CD4-positive, alpha-beta T cell (primary cell): ENCODE measurements at regions of chr1 and their contacts with region 1.

Region 1: GRCh38 chr1:101013776-101014175 is 11.8 kb downstream of the DPH5 start:
- DNase-seq: no peak
- ATAC-seq: no peak
- H3K4me3 ChIP-seq: no peak overlapping the region
- H3K4me3 Mint-ChIP-seq: no peak overlapping the region
- H3K27ac ChIP-seq: no peak overlapping the region
- H3K27ac Mint-ChIP-seq: no peak overlapping the region
- H3K4me1 ChIP-seq: no peaks in the 10 kb centered on the region
- H3K4me1 Mint-ChIP-seq: peaks cover 49% of the 10 kb centered on the region
- H3K27me3 ChIP-seq: no peaks in the 10 kb centered on the region
- H3K27me3 Mint-ChIP-seq: no peaks in the 10 kb centered on the region
- CTCF ChIP-seq: no peak

Region 2: DNA sequence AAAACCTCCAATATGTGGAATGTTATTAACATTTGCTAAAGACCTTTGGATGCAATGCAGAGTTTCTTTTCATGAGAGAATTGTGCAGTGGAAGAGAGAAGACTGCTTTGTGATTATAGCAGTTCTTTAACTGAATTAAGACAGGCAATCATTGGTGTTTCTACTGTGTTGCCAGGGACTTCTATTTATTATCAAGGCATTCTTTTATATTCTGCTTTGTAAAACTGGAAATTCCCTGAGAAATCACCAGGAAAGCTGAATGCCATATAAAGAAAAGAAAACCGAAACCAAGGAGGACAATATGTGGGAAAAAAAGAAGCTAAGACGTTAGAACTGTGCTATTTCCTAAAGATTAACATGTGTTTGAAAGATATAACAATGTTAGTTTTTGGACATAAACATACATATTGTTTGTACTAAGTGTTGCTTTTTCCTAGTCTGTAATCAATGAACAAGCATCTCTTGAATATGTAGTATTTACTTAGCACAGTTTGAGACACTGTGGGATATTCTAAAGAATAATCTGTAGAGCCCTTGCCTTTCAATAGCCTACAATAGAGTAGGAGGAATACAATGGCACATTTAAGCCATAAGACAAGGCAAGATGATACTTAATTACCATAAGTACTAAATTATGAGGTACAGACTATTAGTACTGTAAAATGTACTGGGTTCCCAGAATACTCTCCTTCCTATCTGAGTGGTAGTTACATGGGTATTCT is 166.3 kb before region 1 on chr1:
- CTCF ChIA-PET with region 1: no interaction called
- POLR2A ChIA-PET with region 1: no interaction called
- intact Hi-C with region 1: no loop called
- DNase-seq: no peak
- ATAC-seq: no peak
- H3K4me3 ChIP-seq: no peak overlapping the region
- H3K4me3 Mint-ChIP-seq: no peak overlapping the region
- H3K27ac ChIP-seq: no peak overlapping the region
- H3K27ac Mint-ChIP-seq: no peak overlapping the region
- H3K4me1 ChIP-seq: no peaks in the 10 kb centered on the region
- H3K4me1 Mint-ChIP-seq: no peaks in the 10 kb centered on the region
- H3K27me3 ChIP-seq: peaks cover 7 to 10% of the 10 kb centered on the region in 2 experiments
- H3K27me3 Mint-ChIP-seq: peaks cover 39% of the 10 kb centered on the region
- CTCF ChIP-seq: no peak

Region 3: GRCh38 chr1:100969327-100969726 is 44.4 kb before region 1 on chr1:
- CTCF ChIA-PET with region 1: no interaction called
- POLR2A ChIA-PET with region 1: no interaction called
- intact Hi-C with region 1: loop called in 1 of 2 experiments (anchors 5 kb)
- DNase-seq: no peak
- ATAC-seq: no peak
- H3K4me3 ChIP-seq: no peak overlapping the region
- H3K4me3 Mint-ChIP-seq: no peak overlapping the region
- H3K27ac ChIP-seq: no peak overlapping the region
- H3K27ac Mint-ChIP-seq: peak overlapping the region; percentile 39
- H3K4me1 ChIP-seq: no peaks in the 10 kb centered on the region
- H3K4me1 Mint-ChIP-seq: peaks cover 53% of the 10 kb centered on the region
- H3K27me3 ChIP-seq: no peaks in the 10 kb centered on the region
- H3K27me3 Mint-ChIP-seq: no peaks in the 10 kb centered on the region
- CTCF ChIP-seq: no peak